CD8-positive, alpha-beta T cell (primary cell): ENCODE measurements at regions of chr20 and their contacts with region 1.

Region 1: DNA sequence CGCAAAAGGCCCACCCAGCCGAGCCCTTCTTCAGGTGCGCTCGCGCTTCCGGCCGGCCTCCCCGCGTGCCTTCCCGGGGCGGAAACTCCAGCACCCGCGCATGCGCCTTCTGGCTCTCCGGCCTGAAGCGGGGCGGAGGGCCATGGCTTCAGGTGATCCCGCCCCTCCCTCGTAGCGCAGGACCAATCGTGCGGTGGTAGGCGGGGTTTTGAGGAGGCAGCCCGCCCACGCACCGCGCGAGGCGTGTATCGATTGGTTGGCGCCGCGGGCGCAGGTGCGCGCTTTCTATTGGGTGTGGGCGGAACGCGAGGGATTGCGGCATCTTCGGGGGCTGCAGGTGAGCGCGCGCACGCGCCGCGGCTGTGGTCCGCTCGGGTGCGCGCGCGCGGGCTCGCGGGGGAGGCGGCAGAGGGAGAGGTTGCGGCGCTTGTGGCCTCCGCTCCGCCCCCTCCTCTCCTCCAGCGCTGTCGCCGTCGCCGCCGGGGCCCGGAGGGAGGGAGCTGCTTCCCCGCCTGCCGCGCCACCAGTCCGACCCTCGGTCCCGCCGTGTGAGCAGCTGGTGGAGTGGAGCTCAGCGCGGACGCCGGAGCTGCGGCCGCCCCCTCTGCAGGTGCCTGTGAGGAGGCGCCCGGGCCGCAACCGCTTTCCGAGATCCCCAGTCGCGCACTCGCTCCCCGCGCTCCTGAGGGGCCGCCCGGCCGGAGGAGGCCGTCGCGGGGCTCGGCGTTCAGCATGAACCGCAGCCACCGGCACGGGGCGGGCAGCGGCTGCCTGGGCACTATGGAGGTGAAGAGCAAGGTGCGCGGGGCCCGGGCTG is at the start of gene PARD6B:
- DNase-seq: peak; percentile 98 to 100 (median 99)
- ATAC-seq: peak; percentile 96
- H3K4me3 ChIP-seq: peak within 1 kb of the TSS; percentile 72 to 81
- H3K4me3 Mint-ChIP-seq: peak within 1 kb of the TSS; percentile 91
- H3K27ac ChIP-seq: peak within 1 kb of the TSS; percentile 51 to 54
- H3K27ac Mint-ChIP-seq: peak within 1 kb of the TSS; percentile 86
- H3K4me1 ChIP-seq: peaks cover 16% of the 10 kb centered on the region
- H3K4me1 Mint-ChIP-seq: peaks cover 34% of the 10 kb centered on the region
- H3K27me3 ChIP-seq: no peaks in the 10 kb centered on the region
- H3K27me3 Mint-ChIP-seq: no peaks in the 10 kb centered on the region
- CTCF ChIP-seq: no peak
- total RNA-seq, gene PARD6B: 5.6 to 6.3 TPM

Region 2: GRCh38 chr20:49186535-49187329 is 1544.5 kb before region 1 on chr20:
- CTCF ChIA-PET with region 1: no interaction called
- POLR2A ChIA-PET with region 1: no interaction called
- intact Hi-C with region 1: loop called in 1 of 2 experiments (anchors 5 kb)
- DNase-seq: peak; percentile 22 to 84 (median 69)
- ATAC-seq: peak; percentile 41
- H3K4me3 ChIP-seq: peak overlapping the region; percentile 67 to 82
- H3K4me3 Mint-ChIP-seq: peak overlapping the region; percentile 85
- H3K27ac ChIP-seq: peak overlapping the region; percentile 46 to 81
- H3K27ac Mint-ChIP-seq: peak overlapping the region; percentile 77
- H3K4me1 ChIP-seq: peaks cover 41% of the 10 kb centered on the region
- H3K4me1 Mint-ChIP-seq: peaks cover 47% of the 10 kb centered on the region
- H3K27me3 ChIP-seq: peaks cover 0 to 2% of the 10 kb centered on the region in 2 experiments
- H3K27me3 Mint-ChIP-seq: no peaks in the 10 kb centered on the region
- CTCF ChIP-seq: no peak

Region 3: GRCh38 chr20:49915378-49916145 is 815.7 kb before region 1 on chr20 and contains the start of gene SPATA2:
- CTCF ChIA-PET with region 1: no interaction called
- POLR2A ChIA-PET with region 1: no interaction called
- intact Hi-C with region 1: loop called in 1 of 2 experiments (anchors 5 kb)
- DNase-seq: peak; percentile 87 to 98 (median 95)
- ATAC-seq: peak; percentile 75
- H3K4me3 ChIP-seq: peak within 1 kb of the TSS; percentile 67 to 100
- H3K4me3 Mint-ChIP-seq: peak within 1 kb of the TSS; percentile 98
- H3K27ac ChIP-seq: peak within 1 kb of the TSS; percentile 99 to 100
- H3K27ac Mint-ChIP-seq: peak within 1 kb of the TSS; percentile 100
- H3K4me1 ChIP-seq: peaks cover 21% of the 10 kb centered on the region
- H3K4me1 Mint-ChIP-seq: peaks cover 39% of the 10 kb centered on the region
- H3K27me3 ChIP-seq: no peaks in the 10 kb centered on the region
- H3K27me3 Mint-ChIP-seq: no peaks in the 10 kb centered on the region
- CTCF ChIP-seq: no peak
- total RNA-seq, gene SPATA2: 20.9 to 22.4 TPM

Region 4: GRCh38 chr20:50320910-50321796 is 410.1 kb before region 1 on chr20:
- CTCF ChIA-PET with region 1: no interaction called
- POLR2A ChIA-PET with region 1: no interaction called
- intact Hi-C with region 1: no loop called
- DNase-seq: peak in 1 of 9 experiments; percentile 12
- ATAC-seq: no peak
- H3K4me3 ChIP-seq: no peak overlapping the region
- H3K4me3 Mint-ChIP-seq: no peak overlapping the region
- H3K27ac ChIP-seq: no peak overlapping the region
- H3K27ac Mint-ChIP-seq: no peak overlapping the region
- H3K4me1 ChIP-seq: no peaks in the 10 kb centered on the region
- H3K4me1 Mint-ChIP-seq: no peaks in the 10 kb centered on the region
- H3K27me3 ChIP-seq: no peaks in the 10 kb centered on the region
- H3K27me3 Mint-ChIP-seq: peaks cover 17% of the 10 kb centered on the region
- CTCF ChIP-seq: no peak

Region 5: GRCh38 chr20:50588034-50588611 is 143.1 kb before region 1 on chr20:
- CTCF ChIA-PET with region 1: no interaction called
- POLR2A ChIA-PET with region 1: no interaction called
- intact Hi-C with region 1: loop called in 1 of 2 experiments (anchors 10 kb)
- DNase-seq: peak; percentile 45 to 81 (median 74)
- ATAC-seq: peak; percentile 74
- H3K4me3 ChIP-seq: no peak overlapping the region
- H3K4me3 Mint-ChIP-seq: no peak overlapping the region
- H3K27ac ChIP-seq: no peak overlapping the region
- H3K27ac Mint-ChIP-seq: no peak overlapping the region
- H3K4me1 ChIP-seq: no peaks in the 10 kb centered on the region
- H3K4me1 Mint-ChIP-seq: no peaks in the 10 kb centered on the region
- H3K27me3 ChIP-seq: no peaks in the 10 kb centered on the region
- H3K27me3 Mint-ChIP-seq: no peaks in the 10 kb centered on the region
- CTCF ChIP-seq: peak; percentile 96

Region 6: GRCh38 chr20:50645253-50646118 is 85.8 kb before region 1 on chr20:
- CTCF ChIA-PET with region 1: no interaction called
- POLR2A ChIA-PET with region 1: no interaction called
- intact Hi-C with region 1: no loop called
- DNase-seq: no peak
- ATAC-seq: no peak
- H3K4me3 ChIP-seq: no peak overlapping the region
- H3K4me3 Mint-ChIP-seq: no peak overlapping the region
- H3K27ac ChIP-seq: no peak overlapping the region
- H3K27ac Mint-ChIP-seq: no peak overlapping the region
- H3K4me1 ChIP-seq: no peaks in the 10 kb centered on the region
- H3K4me1 Mint-ChIP-seq: no peaks in the 10 kb centered on the region
- H3K27me3 ChIP-seq: no peaks in the 10 kb centered on the region
- H3K27me3 Mint-ChIP-seq: no peaks in the 10 kb centered on the region
- CTCF ChIP-seq: no peak

Region 7: DNA sequence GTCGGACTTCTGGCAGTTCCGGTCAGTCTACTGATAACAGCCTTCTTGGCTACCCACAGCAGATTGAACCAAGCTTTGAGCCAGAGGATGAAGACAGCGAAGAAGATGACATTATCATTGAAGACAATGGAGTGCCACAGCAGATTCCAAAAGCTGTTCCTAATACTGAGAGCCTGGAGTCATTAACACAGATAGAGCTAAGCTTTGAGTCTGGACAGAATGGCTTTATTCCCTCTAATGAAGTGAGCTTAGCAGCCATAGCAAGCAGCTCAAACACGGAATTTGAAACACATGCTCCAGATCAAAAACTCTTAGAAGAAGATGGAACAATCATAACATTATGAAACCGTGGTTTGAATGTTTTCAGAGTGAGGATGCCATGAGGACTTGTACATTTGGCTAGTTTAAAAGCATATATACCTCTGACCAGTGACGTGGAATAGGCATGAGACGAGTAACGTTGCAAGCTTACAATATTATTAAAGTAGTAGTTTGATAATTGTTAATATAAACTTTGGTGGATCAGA is 18.9 kb after region 1 on chr20:
- CTCF ChIA-PET with region 1: interaction called, 10 read pairs
- POLR2A ChIA-PET with region 1: interaction called, 3 read pairs
- intact Hi-C with region 1: loop called (anchors 1 kb)
- DNase-seq: no peak
- ATAC-seq: no peak
- H3K4me3 ChIP-seq: no peak overlapping the region
- H3K4me3 Mint-ChIP-seq: no peak overlapping the region
- H3K27ac ChIP-seq: no peak overlapping the region
- H3K27ac Mint-ChIP-seq: no peak overlapping the region
- H3K4me1 ChIP-seq: no peaks in the 10 kb centered on the region
- H3K4me1 Mint-ChIP-seq: peaks cover 14% of the 10 kb centered on the region
- H3K27me3 ChIP-seq: no peaks in the 10 kb centered on the region
- H3K27me3 Mint-ChIP-seq: no peaks in the 10 kb centered on the region
- CTCF ChIP-seq: no peak

Region 8: DNA sequence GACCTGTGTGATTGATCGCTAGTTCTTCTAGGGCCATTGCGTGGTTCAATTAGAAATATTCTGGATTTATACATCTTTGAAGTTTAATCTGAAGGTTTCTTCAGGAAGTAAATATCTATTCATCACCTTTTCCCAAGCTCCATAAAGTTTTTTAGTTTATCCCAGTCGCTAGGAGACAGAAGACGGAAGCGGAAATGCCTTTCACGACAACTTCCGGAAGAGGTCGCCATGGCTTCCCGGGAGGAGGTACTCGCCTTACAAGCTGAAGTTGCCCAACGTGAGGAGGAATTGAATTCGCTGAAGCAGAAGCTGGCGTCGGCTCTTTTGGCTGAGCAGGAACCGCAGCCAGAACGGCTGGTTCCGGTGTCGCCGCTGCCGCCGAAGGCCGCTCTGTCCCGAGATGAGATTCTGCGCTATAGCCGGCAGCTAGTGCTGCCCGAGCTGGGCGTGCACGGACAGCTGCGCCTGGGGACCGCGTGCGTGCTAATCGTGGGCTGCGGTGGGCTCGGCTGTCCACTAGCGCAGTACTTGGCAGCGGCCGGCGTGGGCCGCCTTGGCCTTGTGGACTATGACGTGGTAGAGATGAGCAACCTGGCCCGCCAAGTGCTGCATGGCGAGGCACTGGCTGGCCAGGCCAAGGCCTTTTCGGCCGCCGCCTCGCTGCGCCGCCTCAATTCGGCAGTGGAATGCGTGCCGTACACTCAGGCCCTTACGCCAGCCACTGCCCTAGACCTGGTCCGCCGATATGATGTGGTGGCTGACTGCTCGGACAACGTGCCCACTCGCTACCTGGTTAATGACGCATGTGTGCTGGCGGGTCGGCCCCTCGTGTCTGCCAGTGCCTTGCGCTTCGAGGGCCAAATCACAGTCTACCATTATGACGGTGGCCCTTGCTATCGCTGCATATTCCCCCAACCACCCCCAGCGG is 227.6 kb after region 1 on chr20 and contains the start of gene MOCS3:
- CTCF ChIA-PET with region 1: no interaction called
- POLR2A ChIA-PET with region 1: interaction called, 3 read pairs
- intact Hi-C with region 1: loop called (anchors 1 kb)
- DNase-seq: peak; percentile 65 to 95 (median 82)
- ATAC-seq: peak; percentile 77
- H3K4me3 ChIP-seq: peak within 1 kb of the TSS; percentile 73 to 87
- H3K4me3 Mint-ChIP-seq: peak within 1 kb of the TSS; percentile 97
- H3K27ac ChIP-seq: peak within 1 kb of the TSS; percentile 89 to 99
- H3K27ac Mint-ChIP-seq: peak within 1 kb of the TSS; percentile 99
- H3K4me1 ChIP-seq: peaks cover 38% of the 10 kb centered on the region
- H3K4me1 Mint-ChIP-seq: peaks cover 64% of the 10 kb centered on the region
- H3K27me3 ChIP-seq: no peaks in the 10 kb centered on the region
- H3K27me3 Mint-ChIP-seq: no peaks in the 10 kb centered on the region
- CTCF ChIP-seq: no peak
- total RNA-seq, gene MOCS3: 3.6 to 4.1 TPM

Region 9: GRCh38 chr20:51237278-51237677 is 506.0 kb after region 1 on chr20:
- CTCF ChIA-PET with region 1: no interaction called
- POLR2A ChIA-PET with region 1: no interaction called
- intact Hi-C with region 1: no loop called
- DNase-seq: no peak
- ATAC-seq: no peak
- H3K4me3 ChIP-seq: no peak overlapping the region
- H3K4me3 Mint-ChIP-seq: no peak overlapping the region
- H3K27ac ChIP-seq: no peak overlapping the region
- H3K27ac Mint-ChIP-seq: no peak overlapping the region
- H3K4me1 ChIP-seq: no peaks in the 10 kb centered on the region
- H3K4me1 Mint-ChIP-seq: no peaks in the 10 kb centered on the region
- H3K27me3 ChIP-seq: no peaks in the 10 kb centered on the region
- H3K27me3 Mint-ChIP-seq: peaks cover 25% of the 10 kb centered on the region
- CTCF ChIP-seq: no peak